ENCODE measurements at regions of chr19 and their contacts with region 1.

Region 1: GRCh38 chr19:29714953-29715700 is at the start of gene C19orf12:
- DNase-seq: no peak
- total RNA-seq, gene C19orf12: 38.0 TPM

Region 2: DNA sequence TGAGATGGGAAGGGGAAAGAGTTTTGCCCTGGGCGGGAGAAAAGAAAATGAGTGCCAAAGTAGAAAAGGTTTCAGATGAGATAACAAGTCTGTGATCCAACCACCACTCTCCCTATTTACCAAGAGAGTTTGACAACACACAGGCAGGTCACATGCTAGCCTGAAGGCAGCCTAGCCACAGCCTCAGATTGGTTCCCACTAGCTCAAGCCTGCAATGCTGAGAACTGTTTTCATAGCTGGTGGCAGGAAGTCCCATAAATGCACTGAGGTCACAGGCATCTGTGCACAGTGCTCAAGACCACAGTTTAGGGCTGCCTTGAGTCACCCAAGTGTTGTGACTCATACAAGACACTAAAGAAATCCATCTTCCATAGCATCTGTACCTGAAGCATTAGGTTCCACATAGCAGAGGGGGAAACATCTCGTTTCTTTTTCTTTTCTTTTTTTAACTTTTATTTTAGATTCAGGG is 127.6 kb before region 1 on chr19:
- intact Hi-C with region 1: no loop called
- DNase-seq: no peak

Region 3: GRCh38 chr19:29683009-29683408 is 32.1 kb before region 1 on chr19:
- intact Hi-C with region 1: no loop called
- DNase-seq: no peak

Region 4: GRCh38 chr19:29694669-29695627 is 20.2 kb before region 1 on chr19:
- intact Hi-C with region 1: loop called (anchors 2 kb)
- DNase-seq: peak; percentile 91